Spleen (tissue), 13 donors: ENCODE measurements at regions of chr1 and their contacts with region 1.

Region 1: DNA sequence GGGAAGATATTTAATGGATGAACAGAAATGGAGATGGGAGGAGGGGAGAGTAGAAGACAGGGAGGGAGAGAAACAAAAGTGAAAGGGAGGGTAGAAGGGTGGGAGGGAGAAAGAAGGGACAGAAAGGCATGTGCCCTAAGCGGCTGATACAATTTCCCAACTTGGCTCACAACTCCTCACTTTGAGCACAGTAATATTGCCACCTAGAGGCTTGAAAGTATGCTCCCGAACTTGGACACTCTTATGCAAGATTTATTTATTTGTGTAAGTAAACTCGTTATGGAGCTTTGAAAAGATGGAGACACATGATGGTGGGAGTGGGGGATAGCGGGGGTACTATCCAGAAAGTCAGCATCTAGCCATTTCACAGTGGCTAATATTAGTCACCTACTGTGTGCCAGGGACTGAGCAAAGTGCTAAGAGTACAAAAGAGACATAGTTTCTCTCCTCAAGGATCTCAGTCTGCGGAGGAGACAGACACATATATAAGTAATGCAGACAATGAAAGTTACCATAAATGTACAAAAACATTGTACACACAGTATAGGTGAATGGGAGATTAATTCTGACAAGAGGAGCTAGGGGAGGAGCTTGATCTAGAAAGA is 189.7 kb downstream of the SEC16B start:
- DNase-seq: no peak
- H3K4me3 ChIP-seq: no peak overlapping the region
- H3K27ac ChIP-seq: no peak overlapping the region
- H3K4me1 ChIP-seq: peaks cover 0 to 5% (median 0%) of the 10 kb centered on the region in 6 donors
- H3K27me3 ChIP-seq: no peaks in the 10 kb centered on the region
- CTCF ChIP-seq: peak in 10 of 11 experiments; percentile 8 to 62 (median 40)
- POLR2A ChIP-seq: no peak

Region 2: GRCh38 chr1:177256153-177257075 is 523.8 kb before region 1 on chr1:
- intact Hi-C with region 1: loop called (anchors 10 kb)
- DNase-seq: peak; percentile 81
- H3K4me3 ChIP-seq: no peak overlapping the region
- H3K27ac ChIP-seq: peak overlapping the region in 4 of 8 donors; percentile 27 to 45 (median 36)
- H3K4me1 ChIP-seq: peaks cover 0 to 15% (median 4%) of the 10 kb centered on the region in 6 donors
- H3K27me3 ChIP-seq: no peaks in the 10 kb centered on the region
- CTCF ChIP-seq: peak in 10 of 11 experiments; percentile 28 to 74 (median 62)
- POLR2A ChIP-seq: no peak